ENCODE measurements at regions of chr20 and their contacts with region 1.

Region 1: GRCh38 chr20:1870792-1871550 is 24.2 kb upstream of the SIRPA start:
- DNase-seq: peak; percentile 91
- ATAC-seq: peak; percentile 79
- H3K4me3 ChIP-seq: no peak overlapping the region
- H3K4me3 Mint-ChIP-seq: peak overlapping the region; percentile 48
- H3K27ac ChIP-seq: peak overlapping the region; percentile 46 to 66
- H3K27ac Mint-ChIP-seq: peak overlapping the region; percentile 83
- H3K4me1 ChIP-seq: peaks cover 52 to 53% of the 10 kb centered on the region in 2 donors
- H3K4me1 Mint-ChIP-seq: peaks cover 60% of the 10 kb centered on the region
- H3K27me3 ChIP-seq: peaks cover 0 to 18% (median 6%) of the 10 kb centered on the region in 4 experiments
- H3K27me3 Mint-ChIP-seq: peaks cover 6% of the 10 kb centered on the region
- CTCF ChIP-seq: no peak

Region 2: DNA sequence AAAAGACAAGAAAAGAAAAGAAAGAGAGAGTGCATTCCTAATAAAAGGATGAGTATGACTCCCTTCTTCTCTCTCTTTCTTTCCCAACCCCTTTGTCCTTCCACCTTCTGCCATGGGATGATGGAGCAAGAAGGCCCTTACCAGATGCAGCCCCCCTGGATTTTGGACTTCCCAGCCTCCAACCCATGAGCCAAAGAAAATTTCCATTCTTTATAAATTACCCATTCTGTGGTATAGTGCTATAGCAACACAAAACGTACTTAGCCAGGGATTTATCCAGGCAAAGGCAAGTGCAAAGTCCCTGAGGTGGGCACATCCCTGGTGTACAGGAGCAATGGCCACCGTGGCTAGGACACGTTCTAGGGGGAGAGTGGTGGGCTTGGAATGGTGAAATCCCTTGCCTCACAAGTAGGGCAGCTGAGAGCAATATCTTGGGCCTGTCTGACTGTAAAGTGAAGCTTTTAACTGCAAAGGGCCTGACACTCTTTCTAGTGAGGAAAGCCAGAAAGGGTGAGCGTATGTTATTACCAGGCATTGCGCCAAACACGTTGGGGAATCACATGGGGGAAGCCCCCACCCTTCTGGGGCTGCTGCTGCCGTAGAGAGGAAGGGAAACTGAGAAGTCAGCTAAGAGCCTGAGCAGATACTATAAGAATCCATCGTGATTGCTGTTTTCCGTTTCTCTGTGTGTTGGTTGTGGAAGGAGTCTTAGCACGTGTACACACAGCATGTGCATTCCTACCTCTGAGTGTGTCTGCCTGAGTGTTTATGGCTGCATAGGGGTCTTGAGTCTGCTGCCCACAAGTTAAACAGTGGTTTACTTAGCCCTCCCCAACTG is 26.4 kb before region 1 on chr20:
- CTCF ChIA-PET with region 1: interaction called, 5 read pairs
- POLR2A ChIA-PET with region 1: interaction called, 5 read pairs
- intact Hi-C with region 1: loop called (anchors 1 kb)
- DNase-seq: peak; percentile 91
- ATAC-seq: peak; percentile 98
- H3K4me3 ChIP-seq: peak overlapping the region in 1 of 5 experiments; percentile 9
- H3K4me3 Mint-ChIP-seq: peak overlapping the region; percentile 77
- H3K27ac ChIP-seq: peak overlapping the region; percentile 29 to 55
- H3K27ac Mint-ChIP-seq: peak overlapping the region; percentile 91
- H3K4me1 ChIP-seq: peaks cover 46 to 50% of the 10 kb centered on the region in 2 donors
- H3K4me1 Mint-ChIP-seq: peaks cover 69% of the 10 kb centered on the region
- H3K27me3 ChIP-seq: no peaks in the 10 kb centered on the region
- H3K27me3 Mint-ChIP-seq: no peaks in the 10 kb centered on the region
- CTCF ChIP-seq: no peak

Region 3: GRCh38 chr20:1883986-1884385 is 13.0 kb after region 1 on chr20:
- CTCF ChIA-PET with region 1: interaction called, 3 read pairs
- POLR2A ChIA-PET with region 1: interaction called, 6 read pairs
- intact Hi-C with region 1: loop called (anchors 1 kb)
- DNase-seq: no peak
- ATAC-seq: no peak
- H3K4me3 ChIP-seq: no peak overlapping the region
- H3K4me3 Mint-ChIP-seq: peak overlapping the region; percentile 14
- H3K27ac ChIP-seq: no peak overlapping the region
- H3K27ac Mint-ChIP-seq: no peak overlapping the region
- H3K4me1 ChIP-seq: peaks cover 14 to 26% of the 10 kb centered on the region in 2 donors
- H3K4me1 Mint-ChIP-seq: peaks cover 39% of the 10 kb centered on the region
- H3K27me3 ChIP-seq: peaks cover 0 to 22% (median 11%) of the 10 kb centered on the region in 4 experiments
- H3K27me3 Mint-ChIP-seq: peaks cover 25% of the 10 kb centered on the region
- CTCF ChIP-seq: no peak

Region 4: GRCh38 chr20:1900321-1900801 is 29.4 kb after region 1 on chr20:
- CTCF ChIA-PET with region 1: interaction called, 4 read pairs
- POLR2A ChIA-PET with region 1: interaction called, 4 read pairs
- intact Hi-C with region 1: loop called (anchors 2 kb)
- DNase-seq: peak; percentile 52
- ATAC-seq: peak; percentile 22
- H3K4me3 ChIP-seq: no peak overlapping the region
- H3K4me3 Mint-ChIP-seq: no peak overlapping the region
- H3K27ac ChIP-seq: no peak overlapping the region
- H3K27ac Mint-ChIP-seq: no peak overlapping the region
- H3K4me1 ChIP-seq: peaks cover 33 to 37% of the 10 kb centered on the region in 2 donors
- H3K4me1 Mint-ChIP-seq: peaks cover 45% of the 10 kb centered on the region
- H3K27me3 ChIP-seq: no peaks in the 10 kb centered on the region
- H3K27me3 Mint-ChIP-seq: no peaks in the 10 kb centered on the region
- CTCF ChIP-seq: peak; percentile 37

Region 5: GRCh38 chr20:1922786-1923185 is 51.8 kb after region 1 on chr20:
- CTCF ChIA-PET with region 1: no interaction called
- POLR2A ChIA-PET with region 1: no interaction called
- intact Hi-C with region 1: no loop called
- DNase-seq: no peak
- ATAC-seq: no peak
- H3K4me3 ChIP-seq: no peak overlapping the region
- H3K4me3 Mint-ChIP-seq: no peak overlapping the region
- H3K27ac ChIP-seq: no peak overlapping the region
- H3K27ac Mint-ChIP-seq: no peak overlapping the region
- H3K4me1 ChIP-seq: peaks cover 10 to 12% of the 10 kb centered on the region in 2 donors
- H3K4me1 Mint-ChIP-seq: peaks cover 11% of the 10 kb centered on the region
- H3K27me3 ChIP-seq: no peaks in the 10 kb centered on the region
- H3K27me3 Mint-ChIP-seq: no peaks in the 10 kb centered on the region
- CTCF ChIP-seq: no peak

Region 6: DNA sequence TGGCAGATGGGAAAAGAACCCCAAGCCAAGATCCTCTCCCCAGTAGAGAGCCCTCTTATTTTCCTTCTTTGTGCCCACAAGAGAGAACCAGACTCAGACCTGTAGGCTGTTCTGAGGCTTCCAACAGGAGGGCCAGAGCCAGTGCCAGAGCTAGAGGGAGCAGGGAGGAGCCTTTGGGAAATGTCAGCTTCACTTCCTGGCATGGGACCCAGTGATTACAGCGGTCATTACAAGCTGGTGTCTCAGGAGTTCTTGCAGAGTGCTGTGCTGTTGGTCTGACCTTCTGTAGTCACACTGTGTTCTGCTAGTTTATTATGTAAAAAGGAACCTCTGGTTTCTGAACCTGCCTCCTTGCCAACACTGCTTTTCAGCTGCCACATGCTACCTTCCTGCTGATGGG is 269.6 kb after region 1 on chr20:
- CTCF ChIA-PET with region 1: no interaction called
- POLR2A ChIA-PET with region 1: no interaction called
- intact Hi-C with region 1: no loop called
- DNase-seq: no peak
- ATAC-seq: no peak
- H3K4me3 ChIP-seq: no peak overlapping the region
- H3K4me3 Mint-ChIP-seq: no peak overlapping the region
- H3K27ac ChIP-seq: no peak overlapping the region
- H3K27ac Mint-ChIP-seq: no peak overlapping the region
- H3K4me1 ChIP-seq: no peaks in the 10 kb centered on the region
- H3K4me1 Mint-ChIP-seq: peaks cover 4% of the 10 kb centered on the region
- H3K27me3 ChIP-seq: no peaks in the 10 kb centered on the region
- H3K27me3 Mint-ChIP-seq: no peaks in the 10 kb centered on the region
- CTCF ChIP-seq: no peak